Heart left ventricle (tissue), 16 donors: ENCODE measurements at regions of chr12 and their contacts with region 1.

Region 1: DNA sequence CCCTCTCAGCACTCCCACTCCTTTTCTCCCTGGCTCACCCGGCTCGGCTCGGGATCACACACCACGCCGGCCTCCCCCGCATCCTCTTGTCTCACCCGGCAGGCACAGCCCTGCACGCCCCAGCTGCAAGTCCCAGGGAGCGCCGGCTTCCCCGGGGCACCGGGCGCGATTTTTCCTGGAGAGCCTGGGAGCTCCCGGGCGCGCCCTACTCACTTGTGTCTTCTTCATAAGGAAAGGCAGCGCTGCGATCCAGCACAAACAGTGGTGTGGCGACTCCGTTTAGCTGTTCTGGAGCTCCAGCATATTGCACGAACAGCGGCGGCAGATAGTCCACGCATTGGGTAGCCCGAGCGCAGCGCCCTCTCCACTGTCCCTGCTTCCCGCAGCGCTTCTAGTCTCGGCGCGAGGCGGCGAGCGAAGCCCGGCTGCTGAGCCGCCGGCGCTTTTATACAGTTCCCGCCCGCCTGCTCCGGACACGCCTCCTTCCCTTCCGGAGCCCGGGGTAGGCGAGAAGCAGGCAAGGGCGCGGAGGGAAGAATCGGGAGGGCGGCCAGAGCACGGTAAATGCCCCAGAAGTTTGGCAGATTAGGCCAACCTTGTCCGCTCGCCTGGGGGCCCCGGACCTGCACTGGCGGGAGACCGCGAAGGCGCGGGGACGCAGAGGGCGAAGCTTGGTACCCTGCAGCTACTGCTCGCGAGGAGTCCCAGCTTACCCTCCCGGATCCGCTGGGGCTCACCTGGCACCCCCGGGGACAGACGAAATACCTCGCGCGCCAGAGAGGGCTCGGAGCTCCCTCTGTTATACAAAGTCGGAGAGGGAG is at the start of gene KITLG:
- DNase-seq: peak; percentile 81 to 91 (median 86)
- ATAC-seq: peak; percentile 88 to 97 (median 96)
- H3K4me3 ChIP-seq: peak within 1 kb of the TSS; percentile 41 to 85 (median 72)
- H3K27ac ChIP-seq: peak within 1 kb of the TSS; percentile 59 to 88 (median 80)
- H3K4me1 ChIP-seq: peaks cover 0 to 33% (median 5%) of the 10 kb centered on the region in 12 donors
- H3K27me3 ChIP-seq: peaks cover 0 to 25% (median 0%) of the 10 kb centered on the region in 9 donors
- CTCF ChIP-seq: peak in 11 of 12 donors; percentile 15 to 63 (median 37)
- POLR2A ChIP-seq: peak in 1 of 2 donors; percentile 60
- total RNA-seq, gene KITLG: 6.0 to 15.3 (median 10.2) TPM

Region 2: GRCh38 chr12:88141770-88142609 is 438.3 kb before region 1 on chr12 and contains the starts of genes CEP290 and TMTC3:
- intact Hi-C with region 1: loop called in 2 of 10 experiments (anchors 10 kb)
- DNase-seq: peak; percentile 94 to 96 (median 96)
- ATAC-seq: peak; percentile 99
- H3K4me3 ChIP-seq: peak within 1 kb of the TSS; percentile 67 to 92 (median 76)
- H3K27ac ChIP-seq: peak within 1 kb of the TSS in 11 of 12 donors; percentile 59 to 86 (median 77)
- H3K4me1 ChIP-seq: peaks cover 0 to 34% (median 13%) of the 10 kb centered on the region in 12 donors
- H3K27me3 ChIP-seq: no peaks in the 10 kb centered on the region
- CTCF ChIP-seq: no peak
- POLR2A ChIP-seq: peak in 1 of 2 donors; percentile 67
- total RNA-seq, gene CEP290: 6.0 to 11.1 (median 7.7) TPM
- total RNA-seq, gene TMTC3: 7.5 to 13.8 (median 9.8) TPM

Region 3: GRCh38 chr12:88519802-88520435 is 60.3 kb before region 1 on chr12:
- intact Hi-C with region 1: loop called in 1 of 10 experiments (anchors 5 kb)
- DNase-seq: no peak
- ATAC-seq: peak in 1 of 4 donors; percentile 36
- H3K4me3 ChIP-seq: no peak overlapping the region
- H3K27ac ChIP-seq: peak overlapping the region in 2 of 12 donors; percentile 14 to 30
- H3K4me1 ChIP-seq: peaks cover 0 to 17% (median 8%) of the 10 kb centered on the region in 12 donors
- H3K27me3 ChIP-seq: no peaks in the 10 kb centered on the region
- CTCF ChIP-seq: no peak
- POLR2A ChIP-seq: no peak

Region 4: GRCh38 chr12:88985475-88986030 is 405.3 kb after region 1 on chr12:
- intact Hi-C with region 1: loop called in 8 of 10 experiments (anchors 5 to 10 kb)
- DNase-seq: no peak
- ATAC-seq: no peak
- H3K4me3 ChIP-seq: no peak overlapping the region
- H3K27ac ChIP-seq: peak overlapping the region in 1 of 12 donors; percentile 36
- H3K4me1 ChIP-seq: peaks cover 0 to 18% (median 2%) of the 10 kb centered on the region in 12 donors
- H3K27me3 ChIP-seq: no peaks in the 10 kb centered on the region
- CTCF ChIP-seq: no peak
- POLR2A ChIP-seq: no peak